Activated CD8-positive, alpha-beta T cell treated with anti-CD3 and anti-CD28 coated beads for 36 hours (primary cell): ENCODE measurements at regions of chr18 and their contacts with region 1.

Region 1: GRCh38 chr18:45384137-45384961 is 230.9 kb upstream of the SLC14A2 start:
- DNase-seq: peak; percentile 71
- ATAC-seq: peak; percentile 74
- H3K4me3 Mint-ChIP-seq: no peak overlapping the region
- H3K27ac Mint-ChIP-seq: no peak overlapping the region
- H3K4me1 Mint-ChIP-seq: peaks cover 3% of the 10 kb centered on the region
- H3K27me3 Mint-ChIP-seq: peaks cover 28% of the 10 kb centered on the region
- CTCF ChIP-seq: peak; percentile 74

Region 2: GRCh38 chr18:44130376-44130942 is 1253.9 kb before region 1 on chr18:
- CTCF ChIA-PET with region 1: no interaction called
- POLR2A ChIA-PET with region 1: no interaction called
- intact Hi-C with region 1: loop called (anchors 10 kb)
- DNase-seq: peak; percentile 11
- ATAC-seq: peak; percentile 62
- H3K4me3 Mint-ChIP-seq: no peak overlapping the region
- H3K27ac Mint-ChIP-seq: no peak overlapping the region
- H3K4me1 Mint-ChIP-seq: no peaks in the 10 kb centered on the region
- H3K27me3 Mint-ChIP-seq: no peaks in the 10 kb centered on the region
- CTCF ChIP-seq: peak; percentile 62

Region 3: DNA sequence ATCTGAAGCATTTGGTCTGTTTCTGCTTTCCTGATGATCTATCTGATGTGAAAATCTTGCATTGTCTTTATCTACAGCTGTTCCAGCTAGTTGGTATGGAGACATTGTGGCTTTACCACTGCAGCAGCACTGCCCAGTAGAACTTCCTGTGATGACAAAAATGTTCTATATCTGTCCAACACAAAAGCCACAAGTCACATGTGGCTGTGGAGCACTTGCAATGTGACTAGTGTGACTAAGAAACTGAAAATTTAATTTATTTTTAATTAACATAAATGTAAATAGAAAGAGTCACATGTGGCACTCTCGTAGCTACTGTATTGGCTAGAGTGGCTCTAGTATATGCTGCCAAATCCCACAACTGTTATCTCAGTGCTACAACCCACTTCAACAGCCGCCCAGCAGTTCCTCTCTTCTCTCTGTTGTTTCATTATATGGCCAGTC is 278.0 kb before region 1 on chr18:
- CTCF ChIA-PET with region 1: no interaction called
- POLR2A ChIA-PET with region 1: no interaction called
- intact Hi-C with region 1: loop called (anchors 10 kb)
- DNase-seq: peak; percentile 36
- ATAC-seq: peak; percentile 62
- H3K4me3 Mint-ChIP-seq: no peak overlapping the region
- H3K27ac Mint-ChIP-seq: no peak overlapping the region
- H3K4me1 Mint-ChIP-seq: peaks cover 2% of the 10 kb centered on the region
- H3K27me3 Mint-ChIP-seq: peaks cover 2% of the 10 kb centered on the region
- CTCF ChIP-seq: no peak

Region 4: GRCh38 chr18:45275367-45276113 is 108.8 kb before region 1 on chr18:
- CTCF ChIA-PET with region 1: interaction called, 37 read pairs
- POLR2A ChIA-PET with region 1: no interaction called
- intact Hi-C with region 1: loop called (anchors 2 kb)
- DNase-seq: no peak
- ATAC-seq: no peak
- H3K4me3 Mint-ChIP-seq: no peak overlapping the region
- H3K27ac Mint-ChIP-seq: no peak overlapping the region
- H3K4me1 Mint-ChIP-seq: no peaks in the 10 kb centered on the region
- H3K27me3 Mint-ChIP-seq: no peaks in the 10 kb centered on the region
- CTCF ChIP-seq: peak; percentile 95

Region 5: DNA sequence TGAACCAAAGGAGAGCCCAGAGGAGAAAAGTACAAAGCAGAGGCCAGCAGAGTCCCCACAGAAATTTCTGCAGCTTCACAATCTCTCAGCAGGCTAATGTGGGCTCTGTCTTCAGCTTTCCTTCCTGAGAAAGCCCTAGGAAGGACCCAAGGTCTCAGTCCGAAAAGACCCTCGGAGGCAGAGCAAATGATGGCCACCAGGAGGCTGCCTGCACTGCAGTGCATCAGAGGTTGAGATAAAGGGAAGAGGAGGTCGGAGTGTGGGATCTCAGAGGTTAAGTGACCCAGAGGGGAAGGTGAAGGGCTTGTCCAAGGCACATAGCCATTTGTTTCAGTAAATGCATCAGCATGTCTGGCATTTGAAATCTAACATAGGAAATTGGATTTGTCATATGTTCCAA is 68.2 kb before region 1 on chr18:
- CTCF ChIA-PET with region 1: no interaction called
- POLR2A ChIA-PET with region 1: no interaction called
- intact Hi-C with region 1: no loop called
- DNase-seq: no peak
- ATAC-seq: no peak
- H3K4me3 Mint-ChIP-seq: no peak overlapping the region
- H3K27ac Mint-ChIP-seq: no peak overlapping the region
- H3K4me1 Mint-ChIP-seq: no peaks in the 10 kb centered on the region
- H3K27me3 Mint-ChIP-seq: no peaks in the 10 kb centered on the region
- CTCF ChIP-seq: no peak

Region 6: DNA sequence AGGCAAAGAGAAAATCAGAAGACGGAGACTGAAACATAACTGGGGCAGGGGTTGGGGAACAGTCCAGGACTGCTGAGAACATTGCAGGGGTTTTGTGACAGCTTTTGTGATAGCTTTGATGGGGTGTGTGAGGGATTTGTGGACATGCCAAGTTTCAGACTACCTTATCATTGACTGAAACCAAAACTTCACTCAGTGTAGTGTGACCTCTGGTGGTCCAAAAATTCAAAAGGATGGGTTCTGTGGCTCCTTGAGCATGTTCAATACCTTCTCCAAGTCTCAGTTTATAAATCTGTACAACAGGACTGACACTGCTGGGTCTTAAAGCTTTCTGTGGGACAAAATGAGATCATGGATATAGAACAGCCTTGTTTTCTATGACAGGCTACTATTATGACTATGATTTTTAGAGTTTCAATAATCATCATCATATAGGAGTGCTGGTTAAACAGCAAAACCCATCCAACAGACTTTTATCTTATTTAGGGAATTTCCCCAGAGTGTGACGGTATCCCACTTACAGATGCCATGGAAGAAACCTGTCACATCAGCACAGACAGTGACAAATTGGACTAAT is 28.3 kb before region 1 on chr18:
- CTCF ChIA-PET with region 1: no interaction called
- POLR2A ChIA-PET with region 1: no interaction called
- intact Hi-C with region 1: no loop called
- DNase-seq: no peak
- ATAC-seq: no peak
- H3K4me3 Mint-ChIP-seq: no peak overlapping the region
- H3K27ac Mint-ChIP-seq: no peak overlapping the region
- H3K4me1 Mint-ChIP-seq: no peaks in the 10 kb centered on the region
- H3K27me3 Mint-ChIP-seq: peaks cover 7% of the 10 kb centered on the region
- CTCF ChIP-seq: no peak

Region 7: GRCh38 chr18:45370255-45371010 is 13.9 kb before region 1 on chr18:
- CTCF ChIA-PET with region 1: interaction called, 12 read pairs
- POLR2A ChIA-PET with region 1: no interaction called
- intact Hi-C with region 1: no loop called
- DNase-seq: no peak
- ATAC-seq: no peak
- H3K4me3 Mint-ChIP-seq: no peak overlapping the region
- H3K27ac Mint-ChIP-seq: no peak overlapping the region
- H3K4me1 Mint-ChIP-seq: no peaks in the 10 kb centered on the region
- H3K27me3 Mint-ChIP-seq: peaks cover 4% of the 10 kb centered on the region
- CTCF ChIP-seq: no peak